K562 (cell line): ENCODE measurements at regions of chr2 and their contacts with region 1.

Region 1: GRCh38 chr2:181715033-181715630 is 34.8 kb upstream of the NEUROD1 start:
- DNase-seq: peak; percentile 37 to 81 (median 52)
- ATAC-seq: peak; percentile 90
- H3K4me3 ChIP-seq: no peak overlapping the region
- H3K27ac ChIP-seq: no peak overlapping the region
- H3K4me1 ChIP-seq: no peaks in the 10 kb centered on the region
- H3K27me3 ChIP-seq: no peaks in the 10 kb centered on the region
- CTCF ChIP-seq: peak; percentile 57 to 84 (median 68); a peak in 5 of 6 replicates
- EP300 ChIP-seq: no peak
- POLR2A ChIP-seq: no peak
- RAD21 ChIP-seq: peak; percentile 78 to 93

Region 2: DNA sequence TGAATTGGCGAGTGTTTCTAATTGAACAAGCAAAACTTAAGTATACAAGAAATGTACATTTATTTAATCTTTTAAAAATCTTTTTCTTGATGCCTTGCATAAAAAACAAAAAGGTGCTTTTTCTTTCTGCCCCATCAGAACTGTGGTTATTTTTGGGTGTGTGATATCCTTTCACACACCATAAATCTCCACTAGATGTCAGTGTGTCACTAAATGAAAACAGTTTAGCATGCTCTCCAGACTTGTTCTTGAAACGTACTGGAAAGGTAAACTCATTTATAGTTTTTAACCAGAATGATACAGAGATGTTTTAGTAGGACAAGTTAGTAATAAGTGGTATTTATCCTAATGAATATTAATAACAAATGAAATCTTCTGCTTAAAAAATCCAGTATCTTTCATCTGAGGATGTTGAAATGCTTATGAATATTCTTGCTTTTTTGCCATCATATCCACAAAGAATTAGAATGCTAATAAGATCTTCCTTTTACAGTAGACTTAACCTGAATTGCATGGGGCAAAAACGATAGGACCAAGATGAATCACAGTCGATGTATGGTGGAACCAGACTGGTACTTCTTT is 637.9 kb before region 1 on chr2:
- CTCF ChIA-PET with region 1: no interaction called
- POLR2A ChIA-PET with region 1: no interaction called
- in situ Hi-C with region 1: no loop called
- intact Hi-C with region 1: loop called (anchors 1 kb)
- DNase-seq: peak; percentile 27 to 67 (median 40)
- ATAC-seq: peak; percentile 95
- H3K4me3 ChIP-seq: no peak overlapping the region
- H3K27ac ChIP-seq: no peak overlapping the region
- H3K4me1 ChIP-seq: no peaks in the 10 kb centered on the region
- H3K27me3 ChIP-seq: no peaks in the 10 kb centered on the region
- CTCF ChIP-seq: peak; percentile 42 to 72 (median 63); a peak in 5 of 6 replicates
- EP300 ChIP-seq: no peak
- POLR2A ChIP-seq: no peak
- RAD21 ChIP-seq: peak; percentile 61 to 75

Region 3: GRCh38 chr2:181104512-181105115 is 610.5 kb before region 1 on chr2:
- CTCF ChIA-PET with region 1: no interaction called
- POLR2A ChIA-PET with region 1: no interaction called
- in situ Hi-C with region 1: no loop called
- intact Hi-C with region 1: loop called (anchors 2 kb)
- DNase-seq: peak in 2 of 4 experiments; percentile 12 to 25
- ATAC-seq: peak; percentile 47; the same call in 2 of the 3 replicates
- H3K4me3 ChIP-seq: no peak overlapping the region
- H3K27ac ChIP-seq: no peak overlapping the region
- H3K4me1 ChIP-seq: no peaks in the 10 kb centered on the region
- H3K27me3 ChIP-seq: no peaks in the 10 kb centered on the region
- CTCF ChIP-seq: peak; percentile 24 to 51 (median 33); a peak in 4 of 6 replicates
- EP300 ChIP-seq: no peak
- POLR2A ChIP-seq: no peak
- RAD21 ChIP-seq: peak; percentile 61 to 78

Region 4: GRCh38 chr2:181466661-181467576 is 248.2 kb before region 1 on chr2:
- CTCF ChIA-PET with region 1: no interaction called
- POLR2A ChIA-PET with region 1: no interaction called
- in situ Hi-C with region 1: no loop called
- intact Hi-C with region 1: loop called (anchors 2 kb)
- DNase-seq: peak; percentile 7 to 63 (median 34)
- ATAC-seq: peak; percentile 59; the same call in 1 of the 3 replicates
- H3K4me3 ChIP-seq: no peak overlapping the region
- H3K27ac ChIP-seq: no peak overlapping the region
- H3K4me1 ChIP-seq: no peaks in the 10 kb centered on the region
- H3K27me3 ChIP-seq: no peaks in the 10 kb centered on the region
- CTCF ChIP-seq: peak; percentile 48 to 64 (median 53)
- EP300 ChIP-seq: no peak
- POLR2A ChIP-seq: no peak
- RAD21 ChIP-seq: peak; percentile 55 to 63

Region 5: DNA sequence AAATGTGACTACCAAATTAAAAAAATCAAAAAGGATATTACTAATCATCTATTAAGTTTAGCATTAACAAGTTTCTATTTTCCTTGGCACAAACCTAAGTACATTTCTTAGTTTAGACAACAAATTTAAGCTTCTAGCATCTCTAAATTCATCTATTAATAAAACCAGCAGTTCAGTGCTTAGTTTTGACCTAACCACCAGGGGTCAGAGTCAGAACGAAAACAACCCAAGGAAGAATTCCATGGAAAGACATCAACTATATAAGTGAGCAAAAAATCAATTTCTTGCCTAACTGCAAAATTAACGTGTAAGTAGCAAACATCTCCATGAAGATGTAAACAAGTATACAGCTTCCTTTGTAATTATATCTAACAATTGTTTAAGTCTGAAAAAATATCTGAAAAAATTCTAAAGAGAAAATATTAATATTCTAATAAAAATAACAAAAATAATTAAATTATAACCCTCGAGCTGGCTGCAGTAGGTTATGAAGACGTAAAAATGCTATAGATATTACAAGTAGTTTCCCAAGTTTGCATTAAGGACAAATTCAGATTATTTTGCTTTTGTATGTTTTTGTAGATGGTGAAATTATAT is 141.9 kb before region 1 on chr2:
- CTCF ChIA-PET with region 1: no interaction called
- POLR2A ChIA-PET with region 1: no interaction called
- in situ Hi-C with region 1: no loop called
- intact Hi-C with region 1: loop called (anchors 5 kb)
- DNase-seq: peak in 1 of 4 experiments; percentile 12
- ATAC-seq: no peak
- H3K4me3 ChIP-seq: no peak overlapping the region
- H3K27ac ChIP-seq: no peak overlapping the region
- H3K4me1 ChIP-seq: no peaks in the 10 kb centered on the region
- H3K27me3 ChIP-seq: no peaks in the 10 kb centered on the region
- CTCF ChIP-seq: peak in 2 of 3 experiments; percentile 18 to 28; a peak in 2 of 6 replicates
- EP300 ChIP-seq: no peak
- POLR2A ChIP-seq: no peak
- RAD21 ChIP-seq: peak; percentile 32 to 55